Naive thymus-derived CD4-positive, alpha-beta T cell (primary cell): ENCODE measurements at regions of chr10 and their contacts with region 1.

Region 1: DNA sequence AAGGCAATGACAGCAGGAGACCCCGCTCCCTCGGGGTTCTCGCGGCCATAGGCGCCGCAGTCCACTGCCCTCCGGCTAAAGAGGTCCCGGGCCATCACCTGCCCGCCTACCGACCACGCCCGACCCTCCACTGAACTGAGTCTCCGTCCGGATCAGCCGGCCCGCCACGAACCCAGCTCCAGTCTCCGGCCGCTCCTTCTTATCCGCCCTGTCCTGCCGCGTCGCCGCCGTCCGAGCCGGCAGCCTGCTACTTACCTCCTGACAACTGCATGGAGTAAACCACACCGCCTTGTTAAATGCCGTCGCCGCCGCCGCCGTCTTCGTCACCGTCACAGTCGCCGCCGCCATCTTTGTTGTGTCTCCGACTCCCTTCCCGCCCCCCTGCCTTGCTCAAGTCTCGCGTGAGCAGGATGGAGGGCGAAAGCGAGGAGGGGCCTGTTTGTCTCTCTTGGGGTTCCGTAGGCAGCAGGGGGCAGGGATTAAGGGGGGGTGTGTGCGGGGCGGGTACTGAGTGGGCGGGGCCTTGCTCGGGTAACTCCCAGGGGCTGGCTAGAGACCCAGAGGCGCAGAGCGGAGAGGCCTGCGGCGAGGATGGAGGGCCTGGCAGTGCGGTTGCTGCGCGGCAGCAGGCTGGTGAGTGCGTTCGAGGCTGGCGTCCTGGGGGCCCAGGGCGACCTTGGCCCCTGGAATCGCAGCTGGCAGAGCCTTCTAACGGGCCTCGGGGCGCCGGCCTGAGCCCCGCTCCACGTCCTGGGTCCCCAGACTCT is at the starts of genes ACADSB and IKZF5:
- DNase-seq: peak; percentile 83 to 98 (median 96)
- ATAC-seq: peak; percentile 97
- H3K4me3 ChIP-seq: peak within 1 kb of the TSS; percentile 93
- H3K4me3 Mint-ChIP-seq: peak within 1 kb of the TSS; percentile 91 to 100 (median 100)
- H3K27ac ChIP-seq: peak within 1 kb of the TSS; percentile 92
- H3K27ac Mint-ChIP-seq: peak within 1 kb of the TSS; percentile 99 to 100 (median 100)
- H3K4me1 ChIP-seq: peaks cover 28 to 29% of the 10 kb centered on the region in 2 donors
- H3K4me1 Mint-ChIP-seq: peaks cover 28 to 77% (median 70%) of the 10 kb centered on the region in 7 donors
- H3K27me3 ChIP-seq: no peaks in the 10 kb centered on the region
- H3K27me3 Mint-ChIP-seq: no peaks in the 10 kb centered on the region
- total RNA-seq, gene ACADSB: 23.7 to 47.0 (median 27.3) TPM
- total RNA-seq, gene IKZF5: 15.8 to 57.7 (median 37.2) TPM

Region 2: DNA sequence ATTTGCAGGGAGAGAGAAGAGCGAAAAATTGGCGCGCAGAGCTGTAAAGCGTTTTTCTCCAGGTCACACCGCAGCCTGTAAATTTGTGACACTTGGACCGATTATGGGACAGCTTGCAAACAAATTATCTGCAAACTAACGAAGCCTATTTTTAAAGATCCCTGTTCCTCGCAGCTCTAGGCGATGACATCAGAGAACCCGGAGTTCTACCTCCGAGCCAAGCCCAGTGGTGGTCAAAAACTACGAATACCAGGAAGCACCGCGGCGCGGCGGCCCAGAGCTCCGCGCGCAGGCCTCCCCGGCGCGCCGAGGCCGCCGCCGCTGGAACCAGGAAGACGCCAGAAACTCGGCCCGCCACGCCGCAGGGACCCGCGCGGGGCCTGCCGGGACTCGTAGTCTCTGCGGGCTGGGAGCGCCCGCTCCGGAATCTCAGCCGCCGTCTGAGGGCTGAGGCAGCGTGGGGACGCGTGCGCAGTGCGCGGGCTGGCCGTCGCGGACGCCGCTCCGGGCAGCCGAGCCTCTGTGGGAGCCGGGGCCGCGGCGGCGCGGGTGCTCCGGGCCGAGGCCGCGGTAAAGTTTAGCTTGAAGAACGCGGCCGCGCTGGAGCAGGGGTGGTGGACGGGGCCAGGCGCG is 634.3 kb before region 1 on chr10 and contains the start of gene PLEKHA1:
- CTCF ChIA-PET with region 1: no interaction called
- POLR2A ChIA-PET with region 1: no interaction called
- intact Hi-C with region 1: loop called (anchors 1 kb)
- DNase-seq: peak; percentile 91 to 93 (median 92)
- ATAC-seq: peak; percentile 93
- H3K4me3 ChIP-seq: peak within 1 kb of the TSS; percentile 90
- H3K4me3 Mint-ChIP-seq: peak within 1 kb of the TSS; percentile 91 to 99 (median 96)
- H3K27ac ChIP-seq: peak within 1 kb of the TSS; percentile 98
- H3K27ac Mint-ChIP-seq: peak within 1 kb of the TSS; percentile 81 to 98 (median 93)
- H3K4me1 ChIP-seq: peaks cover 6 to 23% of the 10 kb centered on the region in 2 donors
- H3K4me1 Mint-ChIP-seq: peaks cover 21 to 51% (median 37%) of the 10 kb centered on the region in 7 donors
- H3K27me3 ChIP-seq: no peaks in the 10 kb centered on the region
- H3K27me3 Mint-ChIP-seq: peaks cover 0 to 71% (median 5%) of the 10 kb centered on the region in 5 donors
- total RNA-seq, gene PLEKHA1: 5.9 to 90.1 (median 39.2) TPM

Region 3: GRCh38 chr10:122980209-122981065 is 28.2 kb before region 1 on chr10 and contains the start of gene PSTK:
- CTCF ChIA-PET with region 1: interaction called, 5 read pairs
- POLR2A ChIA-PET with region 1: interaction called, 71 read pairs
- intact Hi-C with region 1: loop called (anchors 1 kb)
- DNase-seq: peak; percentile 84 to 90 (median 88)
- ATAC-seq: peak; percentile 97
- H3K4me3 ChIP-seq: peak within 1 kb of the TSS; percentile 67
- H3K4me3 Mint-ChIP-seq: peak within 1 kb of the TSS; percentile 87 to 95 (median 91)
- H3K27ac ChIP-seq: peak within 1 kb of the TSS; percentile 89
- H3K27ac Mint-ChIP-seq: peak within 1 kb of the TSS; percentile 89 to 98 (median 96)
- H3K4me1 ChIP-seq: peaks cover 7 to 14% of the 10 kb centered on the region in 2 donors
- H3K4me1 Mint-ChIP-seq: peaks cover 15 to 29% (median 24%) of the 10 kb centered on the region in 7 donors
- H3K27me3 ChIP-seq: no peaks in the 10 kb centered on the region
- H3K27me3 Mint-ChIP-seq: peaks cover 0 to 13% (median 0%) of the 10 kb centered on the region in 5 donors
- total RNA-seq, gene PSTK: 4.3 to 13.2 (median 5.9) TPM

Region 4: GRCh38 chr10:123241391-123242141 is 232.9 kb after region 1 on chr10:
- CTCF ChIA-PET with region 1: no interaction called
- POLR2A ChIA-PET with region 1: interaction called, 3 read pairs
- intact Hi-C with region 1: loop called (anchors 1 kb)
- DNase-seq: peak; percentile 18 to 92 (median 87)
- ATAC-seq: peak; percentile 95
- H3K4me3 ChIP-seq: peak overlapping the region; percentile 29
- H3K4me3 Mint-ChIP-seq: peak overlapping the region; percentile 46 to 87 (median 74)
- H3K27ac ChIP-seq: peak overlapping the region; percentile 85
- H3K27ac Mint-ChIP-seq: peak overlapping the region; percentile 92 to 100 (median 98)
- H3K4me1 ChIP-seq: peaks cover 24 to 25% of the 10 kb centered on the region in 2 donors
- H3K4me1 Mint-ChIP-seq: peaks cover 10 to 43% (median 42%) of the 10 kb centered on the region in 7 donors
- H3K27me3 ChIP-seq: no peaks in the 10 kb centered on the region
- H3K27me3 Mint-ChIP-seq: no peaks in the 10 kb centered on the region

Region 5: DNA sequence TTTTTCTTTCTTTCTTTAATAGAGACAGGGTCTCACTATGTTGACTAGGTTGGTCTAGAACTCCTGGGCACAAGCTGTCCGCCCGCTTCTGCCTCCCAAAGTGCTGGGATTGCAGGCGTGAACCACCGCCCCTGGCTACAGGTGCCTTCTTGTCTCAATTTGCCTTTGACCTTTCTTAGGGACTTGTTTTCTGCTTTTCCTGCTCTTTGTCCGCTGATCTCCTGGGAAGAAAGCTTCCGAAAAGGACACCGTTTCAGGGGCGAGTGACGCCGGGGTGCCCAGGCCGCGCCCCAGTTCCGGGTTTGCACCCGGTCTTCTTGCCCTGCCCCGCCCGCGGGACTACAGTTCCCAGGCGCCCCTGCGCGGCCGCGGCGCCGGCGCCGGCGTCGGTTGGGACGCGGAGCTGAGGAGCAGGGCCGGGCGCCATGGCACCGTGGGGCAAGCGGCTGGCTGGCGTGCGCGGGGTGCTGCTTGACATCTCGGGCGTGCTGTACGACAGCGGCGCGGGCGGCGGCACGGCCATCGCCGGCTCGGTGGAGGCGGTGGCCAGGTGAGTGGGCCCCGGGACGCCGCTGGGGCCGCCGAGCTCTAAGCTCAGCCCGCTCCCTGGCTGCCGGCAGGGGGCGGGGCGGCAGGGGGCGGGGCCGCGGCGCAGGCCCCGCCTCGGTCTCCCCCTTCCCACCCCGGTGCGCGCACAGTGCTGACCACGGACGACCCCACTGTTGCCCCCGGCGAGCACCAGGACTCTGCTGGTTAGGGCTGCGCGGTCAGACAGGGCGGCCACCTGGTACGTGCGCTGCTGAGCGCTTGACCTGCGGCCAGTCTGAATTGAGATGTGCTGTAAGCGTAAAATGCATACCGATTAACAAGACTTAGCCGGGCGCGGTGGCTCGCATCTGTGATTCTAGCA is 1453.1 kb after region 1 on chr10 and contains the start of gene LHPP:
- CTCF ChIA-PET with region 1: no interaction called
- POLR2A ChIA-PET with region 1: no interaction called
- intact Hi-C with region 1: loop called in 1 of 2 experiments (anchors 2 kb)
- DNase-seq: peak; percentile 77 to 91 (median 87)
- ATAC-seq: peak; percentile 98
- H3K4me3 ChIP-seq: peak within 1 kb of the TSS; percentile 76
- H3K4me3 Mint-ChIP-seq: peak within 1 kb of the TSS; percentile 69 to 96 (median 90)
- H3K27ac ChIP-seq: peak within 1 kb of the TSS; percentile 76
- H3K27ac Mint-ChIP-seq: peak within 1 kb of the TSS; percentile 82 to 98 (median 96)
- H3K4me1 ChIP-seq: peaks cover 13 to 21% of the 10 kb centered on the region in 2 donors
- H3K4me1 Mint-ChIP-seq: peaks cover 23 to 35% (median 28%) of the 10 kb centered on the region in 7 donors
- H3K27me3 ChIP-seq: no peaks in the 10 kb centered on the region
- H3K27me3 Mint-ChIP-seq: peaks cover 0 to 17% (median 11%) of the 10 kb centered on the region in 5 donors
- total RNA-seq, gene LHPP: 19.8 to 31.2 (median 27.6) TPM